ENCODE measurements at regions of chr12 and their contacts with region 1.

Region 1: DNA sequence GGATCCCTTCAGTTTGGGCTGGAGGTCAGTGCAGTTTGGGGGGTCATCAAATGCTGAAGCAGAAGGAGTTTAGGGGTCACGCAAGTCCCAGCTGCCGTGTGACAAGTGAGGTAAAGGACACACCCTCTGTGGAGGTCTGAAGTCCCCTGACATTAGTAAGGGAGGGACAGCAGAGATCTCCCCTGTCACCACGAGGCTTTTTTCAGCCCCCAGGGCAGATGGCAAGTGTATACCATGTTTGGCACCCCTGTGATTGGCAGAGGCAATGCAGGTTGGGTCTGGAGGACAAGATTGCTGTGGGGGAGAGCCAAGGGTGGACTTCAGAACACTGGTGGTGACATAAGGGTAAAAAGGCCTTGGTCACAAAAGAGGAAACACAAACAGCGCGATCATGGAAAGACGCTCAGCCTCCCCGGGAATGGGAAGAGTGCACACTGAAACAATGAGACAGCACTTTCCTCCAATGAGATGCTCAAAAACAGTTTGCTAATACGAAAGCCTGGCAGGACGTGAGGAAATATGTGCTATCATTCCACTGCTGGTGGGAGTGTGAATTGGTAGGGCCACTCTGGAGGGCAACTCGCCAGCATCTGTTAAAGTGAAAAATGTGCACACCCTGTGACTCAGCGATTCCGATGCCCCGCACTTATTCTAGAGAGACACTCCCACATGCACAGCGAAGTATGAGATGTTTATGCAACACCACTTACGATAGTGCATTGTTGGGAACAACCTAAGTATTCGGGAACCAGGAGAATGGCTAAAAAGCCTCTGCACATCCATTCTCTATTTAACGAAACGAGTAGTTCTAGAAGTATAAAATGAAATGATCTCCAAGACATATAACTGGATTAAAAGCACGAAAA is 14.4 kb upstream of the CD27 start:
- DNase-seq: peak; percentile 88
- H3K4me3 ChIP-seq: peak overlapping the region in 3 of 4 donors; percentile 6 to 28 (median 12)
- H3K27ac ChIP-seq: peak overlapping the region; percentile 75 to 85 (median 81)
- H3K4me1 ChIP-seq: peaks cover 0 to 19% (median 16%) of the 10 kb centered on the region in 4 donors
- H3K27me3 ChIP-seq: no peaks in the 10 kb centered on the region
- CTCF ChIP-seq: peak in 1 of 5 experiments; percentile 22
- EP300 ChIP-seq: no peak
- POLR2A ChIP-seq: no peak

Region 2: GRCh38 chr12:6392504-6393077 is 37.8 kb before region 1 on chr12:
- in situ Hi-C with region 1: no loop called
- intact Hi-C with region 1: no loop called
- DNase-seq: peak; percentile 88
- H3K4me3 ChIP-seq: peak overlapping the region in 1 of 4 donors; percentile 5
- H3K27ac ChIP-seq: peak overlapping the region; percentile 87 to 92 (median 90)
- H3K4me1 ChIP-seq: peaks cover 18 to 53% (median 46%) of the 10 kb centered on the region in 4 donors
- H3K27me3 ChIP-seq: no peaks in the 10 kb centered on the region
- CTCF ChIP-seq: no peak
- EP300 ChIP-seq: no peak
- POLR2A ChIP-seq: peak; percentile 85

Region 3: GRCh38 chr12:6451348-6452244 is 21.2 kb after region 1 on chr12 and contains the start of gene TAPBPL:
- in situ Hi-C with region 1: no loop called
- intact Hi-C with region 1: no loop called
- DNase-seq: peak; percentile 89
- H3K4me3 ChIP-seq: peak within 1 kb of the TSS; percentile 65 to 78 (median 73)
- H3K27ac ChIP-seq: peak within 1 kb of the TSS; percentile 97 to 99 (median 98)
- H3K4me1 ChIP-seq: peaks cover 16 to 34% (median 26%) of the 10 kb centered on the region in 4 donors
- H3K27me3 ChIP-seq: no peaks in the 10 kb centered on the region
- CTCF ChIP-seq: peak in 1 of 5 experiments; percentile 8
- EP300 ChIP-seq: no peak
- POLR2A ChIP-seq: peak; percentile 78
- total RNA-seq, gene TAPBPL: 47.6 to 99.1 (median 79.3) TPM

Region 4: DNA sequence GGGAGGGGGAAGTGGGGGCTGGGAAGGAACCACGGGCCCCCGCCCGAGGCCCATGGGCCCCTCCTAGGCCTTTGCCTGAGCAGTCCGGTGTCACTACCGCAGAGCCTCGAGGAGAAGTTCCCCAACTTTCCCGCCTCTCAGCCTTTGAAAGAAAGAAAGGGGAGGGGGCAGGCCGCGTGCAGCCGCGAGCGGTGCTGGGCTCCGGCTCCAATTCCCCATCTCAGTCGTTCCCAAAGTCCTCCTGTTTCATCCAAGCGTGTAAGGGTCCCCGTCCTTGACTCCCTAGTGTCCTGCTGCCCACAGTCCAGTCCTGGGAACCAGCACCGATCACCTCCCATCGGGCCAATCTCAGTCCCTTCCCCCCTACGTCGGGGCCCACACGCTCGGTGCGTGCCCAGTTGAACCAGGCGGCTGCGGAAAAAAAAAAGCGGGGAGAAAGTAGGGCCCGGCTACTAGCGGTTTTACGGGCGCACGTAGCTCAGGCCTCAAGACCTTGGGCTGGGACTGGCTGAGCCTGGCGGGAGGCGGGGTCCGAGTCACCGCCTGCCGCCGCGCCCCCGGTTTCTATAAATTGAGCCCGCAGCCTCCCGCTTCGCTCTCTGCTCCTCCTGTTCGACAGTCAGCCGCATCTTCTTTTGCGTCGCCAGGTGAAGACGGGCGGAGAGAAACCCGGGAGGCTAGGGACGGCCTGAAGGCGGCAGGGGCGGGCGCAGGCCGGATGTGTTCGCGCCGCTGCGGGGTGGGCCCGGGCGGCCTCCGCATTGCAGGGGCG is 103.8 kb after region 1 on chr12 and contains the start of gene GAPDH:
- in situ Hi-C with region 1: loop called in 1 of 4 experiments (anchors 25 kb)
- intact Hi-C with region 1: no loop called
- DNase-seq: peak; percentile 94
- H3K4me3 ChIP-seq: peak within 1 kb of the TSS; percentile 72 to 88 (median 78)
- H3K27ac ChIP-seq: peak within 1 kb of the TSS; percentile 94 to 98 (median 98)
- H3K4me1 ChIP-seq: peaks cover 31 to 60% (median 42%) of the 10 kb centered on the region in 4 donors
- H3K27me3 ChIP-seq: no peaks in the 10 kb centered on the region
- CTCF ChIP-seq: no peak
- EP300 ChIP-seq: no peak
- POLR2A ChIP-seq: peak; percentile 99
- total RNA-seq, gene GAPDH: 1,806 to 2,946 (median 2,333) TPM